Activated CD4-positive, alpha-beta T cell treated with anti-CD3 and anti-CD28 coated beads for 36 hours (primary cell): ENCODE measurements at regions of chr3 and their contacts with region 1.

Region 1: DNA sequence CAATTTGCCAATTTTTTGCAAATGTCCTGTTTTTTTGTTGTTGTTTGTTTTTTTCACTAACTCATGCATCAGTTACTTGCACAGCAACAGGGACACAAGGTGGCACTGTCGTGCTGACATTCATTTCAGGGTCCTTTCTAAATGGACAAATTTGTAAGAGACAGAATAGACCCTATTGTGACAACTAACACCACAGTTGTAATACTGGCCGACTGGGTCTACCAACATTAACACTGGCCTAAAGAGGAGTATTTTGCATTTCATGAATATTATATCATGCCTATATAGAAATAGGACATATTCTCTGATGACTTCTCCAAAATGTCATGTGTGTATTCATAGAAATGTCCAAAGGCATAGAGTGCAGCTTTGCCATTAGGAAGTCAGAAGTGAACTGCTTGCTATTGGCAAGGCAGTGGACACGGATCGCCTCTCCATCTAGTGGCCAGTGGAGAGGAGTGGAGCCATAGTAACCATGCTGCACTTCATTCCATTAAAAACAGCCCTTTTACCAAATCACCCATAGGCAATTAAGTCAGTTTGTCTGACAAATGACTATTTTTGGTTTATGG is 54.8 kb downstream of the ZBTB20 start:
- DNase-seq: peak; percentile 74
- ATAC-seq: peak; percentile 44
- H3K4me3 Mint-ChIP-seq: no peak overlapping the region
- H3K27ac Mint-ChIP-seq: no peak overlapping the region
- H3K4me1 Mint-ChIP-seq: peaks cover 41% of the 10 kb centered on the region
- H3K27me3 Mint-ChIP-seq: no peaks in the 10 kb centered on the region

Region 2: GRCh38 chr3:114846252-114846651 is 246.1 kb before region 1 on chr3:
- CTCF ChIA-PET with region 1: no interaction called
- POLR2A ChIA-PET with region 1: no interaction called
- intact Hi-C with region 1: no loop called
- DNase-seq: no peak
- ATAC-seq: no peak
- H3K4me3 Mint-ChIP-seq: no peak overlapping the region
- H3K27ac Mint-ChIP-seq: no peak overlapping the region
- H3K4me1 Mint-ChIP-seq: no peaks in the 10 kb centered on the region
- H3K27me3 Mint-ChIP-seq: no peaks in the 10 kb centered on the region

Region 3: GRCh38 chr3:115040673-115041286 is 51.5 kb before region 1 on chr3:
- CTCF ChIA-PET with region 1: interaction called, 5 read pairs
- POLR2A ChIA-PET with region 1: no interaction called
- intact Hi-C with region 1: loop called in 1 of 2 experiments (anchors 2 kb)
- DNase-seq: peak; percentile 50
- ATAC-seq: peak; percentile 61
- H3K4me3 Mint-ChIP-seq: no peak overlapping the region
- H3K27ac Mint-ChIP-seq: no peak overlapping the region
- H3K4me1 Mint-ChIP-seq: peaks cover 11% of the 10 kb centered on the region
- H3K27me3 Mint-ChIP-seq: no peaks in the 10 kb centered on the region

Region 4: DNA sequence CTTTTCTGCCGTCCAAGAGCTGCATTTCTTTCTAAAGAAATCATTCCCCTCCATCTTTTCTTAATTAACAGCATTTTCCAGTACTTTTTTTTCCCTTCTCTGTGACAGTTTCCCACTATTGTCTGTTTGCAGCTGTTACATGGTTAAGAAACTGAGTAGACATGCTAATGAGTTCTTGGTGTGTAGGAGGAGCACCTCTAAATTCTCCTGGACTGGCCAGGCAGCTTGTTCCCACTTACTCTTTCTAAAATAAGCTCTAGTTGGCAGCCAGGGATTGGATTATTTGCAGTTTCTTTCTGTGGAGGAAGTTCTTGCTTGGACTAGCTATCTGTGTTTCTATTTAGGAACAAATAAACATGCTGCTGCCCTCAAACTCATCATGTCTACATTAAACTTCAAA is 295.9 kb after region 1 on chr3:
- CTCF ChIA-PET with region 1: no interaction called
- POLR2A ChIA-PET with region 1: no interaction called
- intact Hi-C with region 1: no loop called
- DNase-seq: no peak
- ATAC-seq: no peak
- H3K4me3 Mint-ChIP-seq: no peak overlapping the region
- H3K27ac Mint-ChIP-seq: no peak overlapping the region
- H3K4me1 Mint-ChIP-seq: peaks cover 6% of the 10 kb centered on the region
- H3K27me3 Mint-ChIP-seq: peaks cover 2% of the 10 kb centered on the region

Region 5: DNA sequence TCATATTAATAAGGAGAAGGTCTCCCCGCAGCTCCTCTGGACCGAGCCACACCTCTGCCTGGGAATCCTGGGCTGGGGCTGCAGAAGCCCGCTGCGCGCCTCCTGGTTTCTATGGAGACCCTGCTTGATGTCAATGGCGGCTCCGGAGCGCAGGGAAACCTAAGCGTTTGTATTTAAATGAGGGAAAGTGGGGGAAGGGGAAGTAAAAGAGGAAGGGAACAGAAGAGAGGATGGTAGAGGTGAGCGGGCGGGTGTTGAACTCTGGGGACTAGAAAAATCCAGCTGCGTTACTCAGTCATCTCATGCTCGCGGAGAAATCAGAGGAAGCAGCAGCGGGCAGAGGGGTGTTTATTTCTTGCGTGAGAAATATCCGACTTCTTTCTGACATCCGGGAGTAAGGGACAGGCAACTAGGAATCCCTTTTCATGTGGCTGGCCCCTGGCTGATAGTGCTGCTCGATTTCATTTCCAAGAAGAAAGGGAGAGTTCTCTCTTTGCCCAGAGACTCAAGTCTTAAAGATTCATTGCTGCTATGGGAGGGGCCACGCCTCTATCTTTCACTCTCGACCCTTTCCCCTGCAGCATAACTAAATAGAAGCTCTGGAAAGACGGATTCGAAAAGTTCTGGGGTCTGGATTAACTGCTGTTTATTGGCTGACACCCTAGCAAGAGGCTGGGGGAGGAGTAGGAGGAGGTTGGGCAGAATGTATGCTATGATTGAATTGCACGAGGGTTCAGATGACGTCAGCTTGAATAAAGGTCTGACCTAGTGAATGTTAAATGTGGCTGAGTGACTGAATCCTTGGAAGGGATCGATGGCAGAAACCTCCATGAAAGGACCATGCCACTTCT is 420.5 kb after region 1 on chr3:
- CTCF ChIA-PET with region 1: no interaction called
- POLR2A ChIA-PET with region 1: no interaction called
- intact Hi-C with region 1: loop called in 1 of 2 experiments (anchors 10 kb)
- DNase-seq: peak; percentile 43
- ATAC-seq: peak; percentile 71
- H3K4me3 Mint-ChIP-seq: peak overlapping the region; percentile 76
- H3K27ac Mint-ChIP-seq: peak overlapping the region; percentile 52
- H3K4me1 Mint-ChIP-seq: peaks cover 19% of the 10 kb centered on the region
- H3K27me3 Mint-ChIP-seq: peaks cover 45% of the 10 kb centered on the region

Region 6: GRCh38 chr3:115814778-115815380 is 722.6 kb after region 1 on chr3:
- CTCF ChIA-PET with region 1: interaction called, 8 read pairs
- POLR2A ChIA-PET with region 1: no interaction called
- intact Hi-C with region 1: loop called (anchors 1 to 2 kb)
- DNase-seq: peak; percentile 79
- ATAC-seq: peak; percentile 57
- H3K4me3 Mint-ChIP-seq: no peak overlapping the region
- H3K27ac Mint-ChIP-seq: no peak overlapping the region
- H3K4me1 Mint-ChIP-seq: no peaks in the 10 kb centered on the region
- H3K27me3 Mint-ChIP-seq: peaks cover 7% of the 10 kb centered on the region